RWPE1 (cell line): ENCODE measurements at regions of chr15 and their contacts with region 1.

Region 1: GRCh38 chr15:85504749-85505676 is 124.6 kb downstream of the AKAP13 start:
- DNase-seq: peak; percentile 24
- H3K27ac ChIP-seq: peak overlapping the region; percentile 39
- CTCF ChIP-seq: peak; percentile 80

Region 2: GRCh38 chr15:85485956-85486567 is 19.0 kb before region 1 on chr15:
- CTCF ChIA-PET with region 1: interaction called, 10 read pairs
- POLR2A ChIA-PET with region 1: no interaction called
- DNase-seq: peak; percentile 73
- H3K27ac ChIP-seq: no peak overlapping the region
- CTCF ChIP-seq: peak; percentile 95

Region 3: GRCh38 chr15:85583923-85584390 is 78.9 kb after region 1 on chr15:
- CTCF ChIA-PET with region 1: no interaction called
- POLR2A ChIA-PET with region 1: no interaction called
- DNase-seq: peak; percentile 64
- H3K27ac ChIP-seq: no peak overlapping the region; the same call in 1 of the 2 replicates
- CTCF ChIP-seq: no peak